Gastrocnemius medialis (tissue), 4 donors: ENCODE measurements at regions of chr1 and their contacts with region 1.

Region 1: GRCh38 chr1:216765380-216766300 is 42.4 kb upstream of the ESRRG start:
- DNase-seq: peak; percentile 23 to 69
- ATAC-seq: peak; percentile 95 to 97
- H3K4me3 ChIP-seq: peak overlapping the region; percentile 33 to 49 (median 40)
- H3K27ac ChIP-seq: peak overlapping the region; percentile 75 to 89 (median 78)
- H3K4me1 ChIP-seq: peaks cover 0 to 19% of the 10 kb centered on the region in 2 donors
- H3K27me3 ChIP-seq: no peaks in the 10 kb centered on the region
- CTCF ChIP-seq: no peak
- POLR2A ChIP-seq: peak; percentile 14 to 39

Region 2: GRCh38 chr1:216805233-216805632 is 39.6 kb after region 1 on chr1:
- in situ Hi-C with region 1: no loop called
- intact Hi-C with region 1: loop called (anchors 2 kb)
- DNase-seq: peak; percentile 57 to 61
- ATAC-seq: peak; percentile 96
- H3K4me3 ChIP-seq: peak overlapping the region in 1 of 4 donors; percentile 13
- H3K27ac ChIP-seq: peak overlapping the region; percentile 57 to 77 (median 68)
- H3K4me1 ChIP-seq: peaks cover 10 to 37% of the 10 kb centered on the region in 2 donors
- H3K27me3 ChIP-seq: no peaks in the 10 kb centered on the region
- CTCF ChIP-seq: no peak
- POLR2A ChIP-seq: peak in 1 of 2 donors; percentile 53

Region 3: DNA sequence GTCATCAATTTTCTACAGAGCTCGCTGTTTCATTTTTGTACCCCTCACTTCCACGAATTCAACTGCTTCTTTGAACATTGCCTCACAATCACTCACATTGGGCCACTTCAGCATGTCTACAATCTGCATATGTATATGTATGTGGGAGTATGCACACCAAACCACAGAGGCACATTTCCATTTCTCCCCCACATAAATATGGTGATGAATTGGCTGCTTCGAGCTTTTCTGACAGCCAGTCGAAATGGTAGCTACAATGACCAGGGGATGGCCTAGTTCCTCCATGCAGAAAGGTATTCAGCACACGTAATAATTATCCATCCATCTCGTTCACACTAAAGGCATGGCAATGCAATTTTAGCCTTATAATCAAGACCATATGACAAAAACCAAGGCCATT is 187.2 kb after region 1 on chr1:
- in situ Hi-C with region 1: no loop called
- intact Hi-C with region 1: no loop called
- DNase-seq: no peak
- ATAC-seq: no peak
- H3K4me3 ChIP-seq: no peak overlapping the region
- H3K27ac ChIP-seq: no peak overlapping the region
- H3K4me1 ChIP-seq: no peaks in the 10 kb centered on the region
- H3K27me3 ChIP-seq: no peaks in the 10 kb centered on the region
- CTCF ChIP-seq: no peak
- POLR2A ChIP-seq: no peak